Gastrocnemius medialis (tissue), 4 donors: ENCODE measurements at regions of chr3 and their contacts with region 1.

Region 1: GRCh38 chr3:15557511-15557946 is 36.0 kb upstream of the COLQ start:
- DNase-seq: peak in 1 of 2 donors; percentile 40
- ATAC-seq: peak; percentile 60 to 66
- H3K4me3 ChIP-seq: no peak overlapping the region
- H3K27ac ChIP-seq: no peak overlapping the region
- H3K4me1 ChIP-seq: peaks cover 3% of the 10 kb centered on the region in 2 donors
- H3K27me3 ChIP-seq: no peaks in the 10 kb centered on the region
- CTCF ChIP-seq: peak; percentile 56 to 75 (median 61)
- POLR2A ChIP-seq: no peak

Region 2: GRCh38 chr3:15113463-15113862 is 444.1 kb before region 1 on chr3:
- in situ Hi-C with region 1: no loop called
- intact Hi-C with region 1: loop called (anchors 10 kb)
- DNase-seq: no peak
- ATAC-seq: no peak
- H3K4me3 ChIP-seq: no peak overlapping the region
- H3K27ac ChIP-seq: no peak overlapping the region
- H3K4me1 ChIP-seq: peaks cover 4 to 8% of the 10 kb centered on the region in 2 donors
- H3K27me3 ChIP-seq: no peaks in the 10 kb centered on the region
- CTCF ChIP-seq: no peak
- POLR2A ChIP-seq: no peak

Region 3: GRCh38 chr3:15427182-15427880 is 130.2 kb before region 1 on chr3 and contains the starts of genes EAF1 and METTL6:
- in situ Hi-C with region 1: loop called (anchors 5 to 25 kb)
- intact Hi-C with region 1: loop called (anchors 1 kb)
- DNase-seq: peak; percentile 64 to 72
- ATAC-seq: peak; percentile 90 to 94
- H3K4me3 ChIP-seq: peak within 1 kb of the TSS; percentile 80 to 100 (median 90)
- H3K27ac ChIP-seq: peak within 1 kb of the TSS; percentile 85 to 88 (median 87)
- H3K4me1 ChIP-seq: peaks cover 33 to 40% of the 10 kb centered on the region in 2 donors
- H3K27me3 ChIP-seq: no peaks in the 10 kb centered on the region
- CTCF ChIP-seq: peak in 4 of 5 experiments; percentile 20 to 49 (median 48)
- POLR2A ChIP-seq: peak; percentile 25 to 43
- total RNA-seq, gene EAF1: 9.4 to 17.3 (median 10.5) TPM
- total RNA-seq, gene METTL6: 6.8 to 22.0 (median 7.8) TPM

Region 4: DNA sequence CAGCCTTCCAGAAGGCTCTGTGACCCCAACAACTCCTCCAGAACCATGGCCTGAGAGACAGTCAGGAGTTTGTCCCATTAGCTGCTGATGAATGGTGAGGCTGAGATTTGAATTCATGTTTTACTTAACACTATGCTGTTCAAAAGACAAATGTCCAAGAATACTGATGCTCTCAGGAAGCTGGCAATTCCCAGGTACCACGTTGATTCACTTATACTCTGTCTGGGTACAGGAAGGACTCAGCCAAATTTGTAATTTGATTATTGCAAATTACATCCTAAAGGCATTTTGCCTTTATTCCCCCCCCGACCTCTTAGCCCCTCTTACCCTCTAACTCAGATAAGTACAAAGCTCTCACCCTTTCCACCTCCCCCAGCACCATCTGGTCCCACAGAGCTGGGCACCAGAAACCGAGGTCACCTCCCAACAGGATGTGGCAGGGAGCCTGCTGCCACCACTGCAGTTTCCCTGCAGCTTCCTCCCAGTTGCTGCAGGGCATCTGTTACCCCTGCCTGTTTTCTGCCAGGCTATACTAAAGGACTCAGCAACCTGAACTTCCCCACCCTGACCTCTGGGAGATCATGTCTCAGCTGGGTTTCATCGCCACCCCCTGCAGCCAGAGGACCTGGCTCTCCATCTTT is 96.5 kb before region 1 on chr3:
- in situ Hi-C with region 1: loop called in 1 of 4 experiments (anchors 10 kb)
- intact Hi-C with region 1: no loop called
- DNase-seq: no peak
- ATAC-seq: no peak
- H3K4me3 ChIP-seq: no peak overlapping the region
- H3K27ac ChIP-seq: no peak overlapping the region
- H3K4me1 ChIP-seq: peaks cover 0 to under 1% of the 10 kb centered on the region in 2 donors
- H3K27me3 ChIP-seq: no peaks in the 10 kb centered on the region
- CTCF ChIP-seq: no peak
- POLR2A ChIP-seq: no peak

Region 5: DNA sequence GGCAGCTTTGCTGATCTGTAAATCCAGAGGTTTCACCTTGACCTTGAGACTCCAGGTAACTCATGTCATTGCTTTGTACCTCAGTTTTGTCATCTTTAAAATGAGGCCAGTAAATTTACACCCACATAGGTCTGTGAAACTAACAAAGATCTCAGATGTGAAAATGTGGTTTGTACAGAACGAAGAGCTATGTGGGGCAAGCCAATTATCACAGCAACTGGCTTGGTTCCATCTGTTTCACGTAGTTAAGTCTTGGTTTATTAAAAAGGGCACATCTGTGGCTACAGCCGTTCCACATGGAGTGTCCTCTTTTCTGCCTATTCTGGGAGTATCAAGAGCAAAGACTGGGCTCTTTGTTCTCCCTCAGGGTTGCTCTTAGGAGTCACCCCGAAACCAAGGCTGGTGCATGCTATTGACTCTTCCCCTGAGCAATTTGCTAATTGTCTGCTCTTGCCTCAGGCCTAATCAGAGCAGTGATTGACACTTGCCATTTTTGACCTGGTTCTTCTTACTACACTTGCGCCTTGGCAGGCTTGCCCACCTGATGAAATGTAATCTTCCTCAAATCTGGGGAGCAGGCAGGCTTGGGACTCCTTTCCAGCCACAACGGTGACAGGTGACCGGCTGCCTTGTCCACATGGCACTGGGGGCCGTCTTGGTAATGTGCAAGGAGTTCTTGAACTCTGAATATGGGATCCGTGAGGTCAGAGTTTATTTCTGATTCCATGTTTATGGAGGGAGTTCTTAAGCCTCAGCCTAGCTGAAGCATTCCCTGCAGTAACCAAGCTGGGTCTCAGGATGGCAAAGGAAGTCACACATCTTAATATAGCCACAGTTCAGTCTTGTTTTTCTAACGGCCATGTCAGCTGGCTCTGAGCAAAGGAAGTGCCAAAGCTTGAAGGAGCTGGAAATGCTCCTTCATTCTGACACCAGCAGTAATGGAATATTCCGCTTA is 90.0 kb before region 1 on chr3:
- in situ Hi-C with region 1: loop called in 1 of 4 experiments (anchors 10 kb)
- intact Hi-C with region 1: loop called (anchors 1 kb)
- DNase-seq: peak; percentile 66 to 86
- ATAC-seq: peak; percentile 97
- H3K4me3 ChIP-seq: peak overlapping the region in 2 of 4 donors; percentile 11 to 13
- H3K27ac ChIP-seq: peak overlapping the region; percentile 85 to 95 (median 90)
- H3K4me1 ChIP-seq: peaks cover 12 to 16% of the 10 kb centered on the region in 2 donors
- H3K27me3 ChIP-seq: no peaks in the 10 kb centered on the region
- CTCF ChIP-seq: no peak
- POLR2A ChIP-seq: peak in 1 of 2 donors; percentile 54